ENCODE measurements at regions of chr10 and their contacts with region 1.

Region 1: DNA sequence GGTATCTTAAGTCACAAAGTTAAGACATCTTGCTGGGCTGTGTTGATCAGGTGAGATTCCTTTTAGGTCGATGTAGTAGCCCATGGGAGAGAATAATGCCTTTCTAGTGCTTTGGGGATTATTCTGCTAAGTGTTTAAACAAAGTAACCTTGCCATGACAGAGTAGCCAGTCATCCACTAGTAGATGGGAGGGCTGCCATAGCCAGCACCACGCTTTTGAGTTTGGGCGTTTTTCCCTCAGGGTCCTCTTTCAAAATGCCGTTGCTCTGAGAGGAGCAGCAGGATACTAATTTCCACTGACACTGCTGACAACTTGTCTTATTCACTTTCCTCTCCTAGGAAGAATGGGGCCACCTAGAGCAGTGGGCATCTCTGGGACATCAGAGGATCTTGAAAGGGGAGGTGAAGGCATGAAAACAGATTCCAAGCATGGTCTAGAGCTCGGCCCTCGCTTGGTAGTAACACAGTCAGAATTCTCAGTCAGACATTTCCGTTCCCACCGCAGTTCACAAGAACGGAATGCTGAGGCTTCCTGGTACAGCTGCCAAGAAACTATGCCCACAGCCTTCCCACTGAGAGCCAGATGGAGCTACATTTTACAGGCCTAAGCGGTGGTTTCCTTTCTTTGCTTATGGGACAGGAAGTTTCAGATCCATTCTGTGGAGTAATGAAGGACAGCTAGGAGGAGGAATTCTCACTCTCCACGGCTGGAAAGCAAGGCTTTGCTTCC is 15.3 kb upstream of the RSU1 start:
- DNase-seq: no peak
- H3K4me3 ChIP-seq: no peak overlapping the region
- CTCF ChIP-seq: no peak
- POLR2A ChIP-seq: no peak

Region 2: DNA sequence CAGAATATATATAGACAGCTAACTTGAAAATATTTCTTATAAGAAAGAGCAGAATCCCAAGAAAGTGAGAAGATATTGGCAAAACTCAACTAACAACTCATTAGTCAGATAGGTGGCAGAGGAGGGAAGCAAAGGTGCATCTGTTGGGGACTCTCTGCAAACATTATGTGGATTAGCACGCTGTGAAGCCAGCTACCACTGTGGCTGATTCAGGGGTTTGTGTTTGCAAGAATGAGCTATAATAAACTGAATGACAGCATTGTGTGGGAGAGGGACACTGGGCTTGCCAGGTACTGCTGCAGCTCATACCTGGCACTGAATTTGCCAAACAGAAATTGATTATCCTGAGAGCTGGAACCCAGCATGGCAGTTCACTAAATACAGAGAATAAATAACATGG is 802.0 kb before region 1 on chr10:
- intact Hi-C with region 1: no loop called
- DNase-seq: no peak
- H3K4me3 ChIP-seq: no peak overlapping the region
- CTCF ChIP-seq: no peak
- POLR2A ChIP-seq: no peak

Region 3: GRCh38 chr10:17263580-17263979 is 431.1 kb after region 1 on chr10:
- intact Hi-C with region 1: loop called (anchors 5 kb)
- DNase-seq: no peak
- H3K4me3 ChIP-seq: no peak overlapping the region
- CTCF ChIP-seq: no peak
- POLR2A ChIP-seq: no peak

Region 4: GRCh38 chr10:17430647-17431355 is 598.3 kb after region 1 on chr10:
- intact Hi-C with region 1: loop called (anchors 5 kb)
- DNase-seq: peak; percentile 60 to 90
- H3K4me3 ChIP-seq: no peak overlapping the region
- CTCF ChIP-seq: peak in 1 of 3 donors; percentile 36
- POLR2A ChIP-seq: no peak